HAP-1 (cell line): ENCODE measurements at regions of chr1 and their contacts with region 1.

Region 1: DNA sequence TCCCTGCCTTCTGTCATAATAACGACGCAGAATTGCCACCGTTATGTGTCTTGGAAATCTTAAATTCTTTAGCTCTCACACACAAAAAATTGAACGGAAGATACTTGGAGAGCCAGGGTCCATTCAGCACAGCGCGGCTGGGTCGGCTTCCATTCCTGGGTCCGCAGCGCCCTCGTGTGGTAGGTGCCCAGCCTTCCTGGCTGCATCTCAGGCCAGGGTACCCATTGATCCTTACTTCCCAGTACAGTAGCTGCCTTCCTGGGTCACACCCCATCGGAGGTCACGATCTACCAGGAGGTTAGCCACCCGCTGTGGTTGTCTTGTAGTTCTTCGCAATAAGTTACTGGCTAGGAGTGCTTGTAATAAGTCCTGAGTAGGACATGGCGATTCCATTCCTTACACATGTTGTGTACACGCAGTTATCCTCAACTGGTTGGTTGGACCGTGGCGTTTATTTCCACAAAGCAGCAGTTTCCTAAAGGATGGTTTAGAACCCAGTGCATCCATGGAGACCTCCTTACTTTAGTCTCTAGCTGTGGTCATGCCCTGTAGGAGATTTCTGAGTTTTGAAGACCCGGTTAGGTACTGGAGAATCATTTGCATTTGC is 9.9 kb upstream of the MTARC1 start:
- DNase-seq: peak; percentile 59 to 94
- H3K4me3 ChIP-seq: no peak overlapping the region
- H3K4me1 ChIP-seq: no peaks in the 10 kb centered on the region; the same call in 1 of the 2 replicates
- H3K27me3 ChIP-seq: no peaks in the 10 kb centered on the region

Region 2: DNA sequence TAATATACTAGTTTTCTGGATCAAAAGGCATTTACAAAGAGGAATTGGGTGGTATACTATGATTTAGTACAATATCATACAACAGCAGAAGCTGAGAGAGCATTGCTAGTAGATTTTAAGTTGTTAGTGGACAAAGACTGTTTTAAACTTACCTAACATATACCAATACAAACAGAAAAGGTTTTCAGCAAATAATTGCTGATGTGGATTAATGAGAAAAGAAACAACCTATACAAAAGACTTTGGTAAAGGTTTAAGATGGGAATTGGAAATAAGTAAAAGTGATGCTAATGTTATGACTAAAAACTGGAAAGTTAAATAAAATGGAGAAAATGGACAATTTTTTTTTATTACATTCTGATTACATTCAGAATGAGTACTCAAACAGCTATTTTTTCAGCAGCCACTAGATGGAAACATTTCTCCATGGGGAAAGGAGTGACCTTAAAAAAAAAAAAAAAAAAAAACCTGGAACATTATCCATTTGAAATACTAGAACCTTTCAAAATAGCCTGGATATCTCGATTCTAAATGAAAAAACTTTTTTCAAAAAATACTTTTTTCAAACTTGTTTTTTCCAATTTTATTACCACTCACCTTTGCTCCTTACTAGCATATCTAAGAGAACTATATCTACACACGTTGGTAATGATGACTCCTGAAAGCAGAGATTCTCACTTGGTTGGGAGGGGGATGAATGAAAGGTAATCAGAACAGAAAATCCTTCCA is 785.9 kb before region 1 on chr1:
- in situ Hi-C with region 1: loop called (anchors 25 kb)
- DNase-seq: peak in 1 of 2 experiments; percentile 12
- H3K4me3 ChIP-seq: no peak overlapping the region
- H3K4me1 ChIP-seq: peaks cover 8% of the 10 kb centered on the region
- H3K27me3 ChIP-seq: no peaks in the 10 kb centered on the region

Region 3: GRCh38 chr1:220294846-220295301 is 481.9 kb before region 1 on chr1:
- in situ Hi-C with region 1: loop called (anchors 10 kb)
- DNase-seq: no peak
- H3K4me3 ChIP-seq: no peak overlapping the region
- H3K4me1 ChIP-seq: peaks cover 6% of the 10 kb centered on the region; the same call in 1 of the 2 replicates
- H3K27me3 ChIP-seq: peaks cover 9% of the 10 kb centered on the region

Region 4: DNA sequence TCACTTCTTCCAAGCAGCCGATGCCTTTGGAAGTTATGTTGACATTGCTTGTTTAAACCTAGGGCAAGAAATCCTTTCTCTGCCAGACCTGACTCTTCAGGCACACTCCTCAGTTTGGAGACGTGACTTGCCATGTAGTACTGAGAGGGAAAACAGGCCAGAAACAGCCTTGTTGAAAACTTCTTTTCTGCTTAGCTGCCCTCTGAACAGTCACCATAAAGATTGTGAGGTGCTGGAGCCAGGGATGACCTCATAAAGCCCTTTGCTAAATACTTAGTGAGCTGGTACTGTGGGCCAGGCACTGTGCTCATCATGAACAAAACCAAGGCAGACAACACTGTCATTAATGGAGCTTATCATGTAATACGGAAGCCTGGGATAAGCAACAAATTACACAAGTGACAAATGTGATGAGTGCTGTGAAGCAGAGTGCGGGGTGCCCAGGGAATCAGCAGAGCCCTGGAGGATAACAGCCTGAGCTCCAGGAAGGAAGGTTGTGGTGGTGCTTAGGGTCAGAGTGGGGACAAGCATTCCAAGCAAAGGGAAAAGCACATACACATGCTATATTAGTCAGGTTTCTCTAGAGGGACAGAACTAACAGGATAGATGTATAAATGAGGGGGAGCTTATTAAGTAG is 52.2 kb after region 1 on chr1:
- in situ Hi-C with region 1: no loop called
- DNase-seq: no peak
- H3K4me3 ChIP-seq: no peak overlapping the region
- H3K4me1 ChIP-seq: no peaks in the 10 kb centered on the region
- H3K27me3 ChIP-seq: no peaks in the 10 kb centered on the region

Region 5: GRCh38 chr1:221565711-221566110 is 788.9 kb after region 1 on chr1:
- in situ Hi-C with region 1: no loop called
- DNase-seq: no peak
- H3K4me3 ChIP-seq: no peak overlapping the region
- H3K4me1 ChIP-seq: no peaks in the 10 kb centered on the region
- H3K27me3 ChIP-seq: no peaks in the 10 kb centered on the region